ENCODE measurements at regions of chr13 and their contacts with region 1.

Region 1: GRCh38 chr13:99656092-99656745 is 154.9 kb downstream of the TM9SF2 start:
- DNase-seq: peak; percentile 75 to 85 (median 83)
- H3K4me3 ChIP-seq: no peak overlapping the region
- H3K27ac ChIP-seq: no peak overlapping the region
- H3K4me1 ChIP-seq: peaks cover 4 to 15% (median 12%) of the 10 kb centered on the region in 4 experiments
- H3K27me3 ChIP-seq: peaks cover 8 to 16% (median 9%) of the 10 kb centered on the region in 5 experiments

Region 2: DNA sequence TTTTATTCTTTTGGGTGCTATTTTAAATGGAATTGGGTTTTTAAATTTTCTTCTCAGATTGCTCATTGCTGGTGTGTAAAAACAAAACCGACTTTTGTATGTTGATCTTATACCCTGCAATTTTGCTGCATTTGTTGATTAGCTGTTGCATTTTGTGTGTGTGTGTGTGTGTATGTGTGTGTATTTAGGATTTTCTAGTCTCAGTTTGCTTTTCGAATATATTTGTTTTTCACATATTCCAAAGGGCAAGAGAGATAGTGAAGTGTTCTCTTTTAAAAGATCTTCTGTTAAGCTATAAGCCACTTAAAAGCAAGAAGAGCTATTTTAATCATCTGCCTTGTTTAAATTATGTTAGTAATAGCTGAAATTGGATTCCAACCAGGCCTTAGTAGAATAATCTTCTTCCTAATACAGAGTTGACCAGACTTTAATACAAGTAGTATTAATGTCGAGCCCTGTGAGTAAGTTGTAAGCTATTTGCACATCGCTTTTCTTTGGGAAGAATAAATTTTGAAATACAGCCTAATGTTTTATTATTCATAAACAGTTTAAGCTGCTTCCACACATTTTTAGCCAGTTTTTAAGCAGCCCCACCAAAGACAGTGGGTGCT is 97.5 kb before region 1 on chr13:
- CTCF ChIA-PET with region 1: no interaction called
- POLR2A ChIA-PET with region 1: no interaction called
- DNase-seq: no peak
- H3K4me3 ChIP-seq: no peak overlapping the region
- H3K27ac ChIP-seq: no peak overlapping the region
- H3K4me1 ChIP-seq: no peaks in the 10 kb centered on the region
- H3K27me3 ChIP-seq: no peaks in the 10 kb centered on the region

Region 3: GRCh38 chr13:99671746-99672145 is 15.5 kb after region 1 on chr13:
- CTCF ChIA-PET with region 1: interaction called, 11 read pairs
- POLR2A ChIA-PET with region 1: no interaction called
- DNase-seq: no peak
- H3K4me3 ChIP-seq: no peak overlapping the region
- H3K27ac ChIP-seq: no peak overlapping the region
- H3K4me1 ChIP-seq: no peaks in the 10 kb centered on the region
- H3K27me3 ChIP-seq: no peaks in the 10 kb centered on the region

Region 4: DNA sequence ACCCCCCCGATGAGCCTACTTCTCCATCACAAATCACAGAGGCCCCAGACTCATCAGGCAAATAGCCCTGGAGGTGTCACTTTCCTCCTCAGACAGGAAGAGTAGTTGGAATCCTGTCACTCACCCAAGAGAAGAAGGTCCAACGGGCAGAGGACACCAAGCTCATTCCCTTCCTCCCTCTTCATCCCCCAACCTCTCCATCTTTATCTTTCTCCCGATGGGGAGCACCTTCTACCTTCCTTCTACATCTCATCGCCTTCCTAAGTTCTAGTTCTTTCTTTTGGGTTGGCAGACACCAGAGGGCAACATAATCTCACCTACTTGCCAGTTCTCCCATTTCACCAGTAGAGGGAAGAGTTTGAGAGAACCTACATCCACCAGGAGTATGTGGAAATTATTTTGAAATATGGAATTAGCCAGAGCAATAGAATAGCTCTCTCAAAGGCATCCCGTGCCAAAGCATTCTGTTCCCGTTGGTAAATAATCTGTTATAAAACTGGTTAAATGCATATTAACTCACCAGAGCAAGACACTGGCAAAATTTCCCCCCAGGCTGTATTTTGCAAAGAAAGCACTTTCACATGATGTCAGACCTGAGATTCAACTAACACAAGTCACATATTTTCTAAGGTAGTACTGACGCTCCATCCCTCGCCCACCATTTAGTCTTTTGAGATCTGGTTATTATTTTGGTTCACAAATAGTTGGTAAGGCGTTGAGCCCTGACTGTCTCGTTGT is 260.3 kb after region 1 on chr13:
- CTCF ChIA-PET with region 1: interaction called, 32 read pairs
- POLR2A ChIA-PET with region 1: no interaction called
- DNase-seq: peak; percentile 63 to 77 (median 73)
- H3K4me3 ChIP-seq: no peak overlapping the region
- H3K27ac ChIP-seq: no peak overlapping the region
- H3K4me1 ChIP-seq: no peaks in the 10 kb centered on the region
- H3K27me3 ChIP-seq: peaks cover 0 to 40% (median 7%) of the 10 kb centered on the region in 5 experiments

Region 5: GRCh38 chr13:100235311-100235901 is 579.2 kb after region 1 on chr13:
- CTCF ChIA-PET with region 1: interaction called, 14 read pairs
- POLR2A ChIA-PET with region 1: no interaction called
- DNase-seq: peak; percentile 27 to 37 (median 28)
- H3K4me3 ChIP-seq: no peak overlapping the region
- H3K27ac ChIP-seq: no peak overlapping the region
- H3K4me1 ChIP-seq: peaks cover 0 to 19% (median 8%) of the 10 kb centered on the region in 4 experiments
- H3K27me3 ChIP-seq: no peaks in the 10 kb centered on the region

Region 6: GRCh38 chr13:100514788-100515409 is 858.7 kb after region 1 on chr13:
- CTCF ChIA-PET with region 1: interaction called, 12 read pairs
- POLR2A ChIA-PET with region 1: no interaction called
- DNase-seq: peak; percentile 58 to 77 (median 71)
- H3K4me3 ChIP-seq: no peak overlapping the region
- H3K27ac ChIP-seq: no peak overlapping the region
- H3K4me1 ChIP-seq: peaks cover 0 to 4% (median 2%) of the 10 kb centered on the region in 4 experiments
- H3K27me3 ChIP-seq: peaks cover 0 to 3% (median 0%) of the 10 kb centered on the region in 5 experiments